Activated CD4-positive, alpha-beta T cell treated with anti-CD3 and anti-CD28 coated beads for 36 hours (primary cell): ENCODE measurements at regions of chr21 and their contacts with region 1.

Region 1: DNA sequence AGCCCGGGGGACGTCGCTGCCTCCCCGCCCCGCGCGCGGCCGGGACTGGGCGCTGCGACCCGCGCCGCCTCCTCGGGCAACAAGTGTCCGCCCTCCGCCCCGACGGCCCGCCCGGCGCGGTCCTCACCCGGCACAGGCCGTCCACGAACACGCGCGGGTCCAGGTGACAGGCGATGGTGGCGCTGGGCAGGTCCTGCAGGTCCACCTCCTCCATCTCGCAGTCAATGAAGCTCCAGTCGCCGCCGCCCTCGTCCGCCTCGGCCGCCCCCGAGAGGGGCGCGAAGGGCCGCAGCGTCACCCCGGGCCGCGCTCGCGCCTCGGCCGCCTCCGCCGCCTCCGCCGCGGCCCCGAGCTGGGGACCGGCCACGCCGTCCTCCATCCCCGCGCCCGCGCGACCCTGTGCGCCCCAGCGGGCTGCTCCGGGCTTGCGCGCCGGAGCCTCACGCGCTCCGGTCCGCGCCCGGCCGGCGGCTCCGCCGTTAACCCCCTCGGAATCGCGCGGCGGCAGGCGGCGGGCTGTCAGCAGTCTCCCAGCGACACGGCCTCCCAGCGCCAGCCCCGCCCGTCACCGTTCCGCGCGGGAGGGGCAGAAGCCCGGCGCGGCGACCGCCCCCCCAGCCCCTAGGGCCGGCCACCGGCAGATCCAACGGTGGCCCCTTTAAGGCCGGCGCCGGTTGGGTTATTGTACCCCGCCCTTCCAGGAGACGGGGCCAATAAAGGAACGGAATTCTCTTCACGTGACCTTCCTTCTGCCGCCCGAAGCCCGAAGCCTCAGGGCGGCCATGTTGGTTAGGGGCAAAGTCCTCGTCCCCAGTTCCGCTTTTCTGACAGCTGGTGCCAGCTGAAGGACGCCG is at the start of gene RCAN1:
- DNase-seq: peak; percentile 92
- ATAC-seq: peak; percentile 98
- H3K4me3 Mint-ChIP-seq: peak within 1 kb of the TSS; percentile 75
- H3K27ac Mint-ChIP-seq: peak within 1 kb of the TSS; percentile 68
- H3K4me1 Mint-ChIP-seq: peaks cover 18% of the 10 kb centered on the region
- H3K27me3 Mint-ChIP-seq: no peaks in the 10 kb centered on the region
- total RNA-seq, gene RCAN1: 9.9 to 10.0 TPM

Region 2: DNA sequence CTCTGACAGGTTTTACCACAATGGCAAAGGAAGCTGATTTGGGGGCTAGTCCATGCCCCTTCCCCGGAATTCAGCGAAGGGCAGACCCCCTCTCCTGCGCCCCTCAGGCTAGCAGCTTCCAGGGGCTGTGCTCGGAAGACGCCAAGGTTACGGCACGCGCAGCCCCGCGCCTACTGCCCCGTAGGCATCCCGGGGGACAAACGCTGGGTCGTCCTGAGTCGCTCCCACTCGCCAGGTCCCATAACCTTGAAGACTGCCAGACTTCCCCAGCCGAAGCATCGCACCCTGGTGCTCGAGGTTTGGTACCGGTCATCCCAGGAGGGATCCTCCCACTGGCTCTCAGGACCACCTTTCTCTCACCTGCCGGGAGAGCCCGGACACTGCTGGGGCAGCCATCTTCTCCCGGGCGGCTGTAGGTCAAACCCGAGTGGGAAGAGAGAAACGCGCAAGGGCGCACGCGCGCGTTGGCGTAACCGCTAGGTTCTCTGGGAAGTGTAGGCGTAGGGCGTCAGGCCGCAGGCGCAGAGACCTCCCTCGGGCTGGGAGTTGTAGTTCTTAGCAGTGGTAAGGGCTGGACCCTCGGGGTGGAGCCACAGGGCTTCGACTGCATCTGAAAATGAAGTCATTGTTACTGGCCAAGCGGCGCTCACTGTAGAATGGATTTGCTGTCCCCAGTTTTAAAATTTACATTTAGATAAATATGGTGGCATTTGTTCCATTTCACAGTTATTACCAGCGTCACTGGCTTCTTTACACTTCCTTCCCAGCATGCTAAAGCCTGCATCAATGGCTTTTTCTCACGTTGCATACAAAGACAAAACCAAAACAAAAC is 699.3 kb before region 1 on chr21 and contains the start of gene ATP5PO:
- CTCF ChIA-PET with region 1: interaction called, 4 read pairs
- POLR2A ChIA-PET with region 1: no interaction called
- intact Hi-C with region 1: loop called (anchors 1 to 10 kb)
- DNase-seq: peak; percentile 98
- ATAC-seq: peak; percentile 99
- H3K4me3 Mint-ChIP-seq: peak within 1 kb of the TSS; percentile 89
- H3K27ac Mint-ChIP-seq: peak within 1 kb of the TSS; percentile 97
- H3K4me1 Mint-ChIP-seq: peaks cover 27% of the 10 kb centered on the region
- H3K27me3 Mint-ChIP-seq: no peaks in the 10 kb centered on the region
- total RNA-seq, gene ATP5PO: 177 to 238 TPM

Region 3: GRCh38 chr21:34526618-34527290 is 88.1 kb before region 1 on chr21:
- CTCF ChIA-PET with region 1: no interaction called
- POLR2A ChIA-PET with region 1: no interaction called
- intact Hi-C with region 1: loop called (anchors 2 to 5 kb)
- DNase-seq: peak; percentile 71
- ATAC-seq: peak; percentile 85
- H3K4me3 Mint-ChIP-seq: peak overlapping the region; percentile 55
- H3K27ac Mint-ChIP-seq: peak overlapping the region; percentile 85
- H3K4me1 Mint-ChIP-seq: peaks cover 35% of the 10 kb centered on the region
- H3K27me3 Mint-ChIP-seq: peaks cover 2% of the 10 kb centered on the region

Region 4: GRCh38 chr21:34589511-34590282 is 25.2 kb before region 1 on chr21:
- CTCF ChIA-PET with region 1: no interaction called
- POLR2A ChIA-PET with region 1: no interaction called
- intact Hi-C with region 1: no loop called
- DNase-seq: no peak
- ATAC-seq: no peak
- H3K4me3 Mint-ChIP-seq: no peak overlapping the region
- H3K27ac Mint-ChIP-seq: no peak overlapping the region
- H3K4me1 Mint-ChIP-seq: peaks cover 14% of the 10 kb centered on the region
- H3K27me3 Mint-ChIP-seq: no peaks in the 10 kb centered on the region

Region 5: DNA sequence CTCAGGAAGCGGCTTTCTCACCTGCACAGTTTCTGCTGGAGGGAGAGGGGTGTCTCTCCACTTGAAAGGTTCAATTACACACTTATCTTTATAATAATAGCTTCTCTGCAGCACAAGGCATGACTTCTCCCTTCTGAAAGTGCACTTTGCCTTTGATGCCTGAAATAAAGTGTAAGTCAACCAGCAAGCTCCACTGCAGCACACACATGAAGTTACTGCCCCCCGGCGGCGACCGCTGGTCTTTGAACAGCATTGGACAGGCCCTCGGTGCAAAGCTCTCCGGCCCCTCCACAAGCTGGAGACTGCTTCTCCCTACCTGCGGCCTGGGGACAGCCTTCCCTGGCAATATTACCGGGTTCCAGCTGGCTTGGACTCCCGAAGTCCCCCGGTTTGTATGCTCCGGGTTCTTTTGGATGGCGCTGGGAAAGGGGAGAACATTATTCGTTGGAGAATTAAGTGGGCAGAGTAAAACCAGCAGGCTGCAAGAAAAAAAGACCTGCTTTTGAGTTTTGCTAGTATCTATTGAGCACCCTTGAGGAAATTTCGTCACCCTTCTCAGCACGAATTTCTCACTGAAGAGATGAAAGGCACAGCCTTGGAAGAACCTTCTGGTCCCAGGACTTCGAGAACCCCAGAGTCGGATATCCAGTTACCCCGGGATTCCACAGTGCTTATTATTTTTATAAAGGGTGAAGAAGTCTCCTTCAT is 11.7 kb before region 1 on chr21:
- CTCF ChIA-PET with region 1: interaction called, 20 read pairs
- POLR2A ChIA-PET with region 1: no interaction called
- intact Hi-C with region 1: no loop called
- DNase-seq: peak; percentile 85
- ATAC-seq: peak; percentile 89
- H3K4me3 Mint-ChIP-seq: no peak overlapping the region
- H3K27ac Mint-ChIP-seq: no peak overlapping the region
- H3K4me1 Mint-ChIP-seq: no peaks in the 10 kb centered on the region
- H3K27me3 Mint-ChIP-seq: no peaks in the 10 kb centered on the region

Region 6: DNA sequence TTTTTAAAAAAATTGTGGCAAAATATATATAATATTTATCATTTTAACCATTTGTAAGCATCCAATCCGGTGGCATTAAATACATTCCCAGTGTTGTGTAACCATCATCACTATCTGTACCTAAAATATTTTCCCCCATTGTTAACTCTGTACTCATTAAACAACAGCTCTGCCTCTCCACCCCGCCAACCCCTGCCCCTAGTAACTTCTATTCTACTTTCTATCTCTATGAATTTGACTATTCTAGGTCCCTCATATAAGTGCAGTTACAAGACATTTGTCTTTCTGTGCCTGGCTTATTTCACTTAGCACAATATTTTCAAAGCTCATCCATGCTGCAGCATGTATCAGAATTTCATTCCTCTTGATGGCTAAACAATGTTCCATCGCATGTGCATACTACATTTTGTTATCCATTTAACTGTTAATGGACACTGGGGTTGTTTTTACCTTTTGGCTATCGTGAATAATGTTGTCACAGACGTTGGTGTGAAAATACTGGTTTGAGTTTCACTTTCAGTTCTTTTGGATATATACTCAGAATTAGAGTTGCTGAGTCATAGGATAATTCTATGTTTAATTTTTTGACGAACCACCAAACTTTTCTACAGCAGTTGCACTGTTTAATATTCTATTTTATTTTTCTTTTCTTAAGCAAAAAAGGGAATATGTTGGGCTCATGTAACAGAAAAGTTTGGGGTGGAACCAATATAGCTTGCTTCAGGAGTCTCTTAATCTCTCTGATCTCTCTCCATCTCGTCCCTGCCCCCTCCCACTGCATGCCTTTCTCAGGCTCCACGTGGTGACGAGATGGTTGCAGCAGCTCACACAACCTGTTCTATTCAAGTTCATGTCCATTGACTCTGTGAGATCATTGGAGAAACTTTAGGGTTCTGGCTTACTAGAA is 25.3 kb after region 1 on chr21:
- CTCF ChIA-PET with region 1: interaction called, 3 read pairs
- POLR2A ChIA-PET with region 1: no interaction called
- intact Hi-C with region 1: loop called in 1 of 2 experiments (anchors 1 kb)
- DNase-seq: peak; percentile 65
- ATAC-seq: peak; percentile 77
- H3K4me3 Mint-ChIP-seq: peak overlapping the region; percentile 32
- H3K27ac Mint-ChIP-seq: peak overlapping the region; percentile 72
- H3K4me1 Mint-ChIP-seq: peaks cover 24% of the 10 kb centered on the region
- H3K27me3 Mint-ChIP-seq: no peaks in the 10 kb centered on the region

Region 7: GRCh38 chr21:34661848-34662247 is 47.0 kb after region 1 on chr21:
- CTCF ChIA-PET with region 1: no interaction called
- POLR2A ChIA-PET with region 1: no interaction called
- intact Hi-C with region 1: no loop called
- DNase-seq: no peak
- ATAC-seq: no peak
- H3K4me3 Mint-ChIP-seq: no peak overlapping the region
- H3K27ac Mint-ChIP-seq: no peak overlapping the region
- H3K4me1 Mint-ChIP-seq: peaks cover under 1% of the 10 kb centered on the region
- H3K27me3 Mint-ChIP-seq: peaks cover 48% of the 10 kb centered on the region

Region 8: GRCh38 chr21:36069713-36070573 is 1455.1 kb after region 1 on chr21 and contains the start of gene CBR1:
- CTCF ChIA-PET with region 1: no interaction called
- POLR2A ChIA-PET with region 1: no interaction called
- intact Hi-C with region 1: loop called in 1 of 2 experiments (anchors 5 kb)
- DNase-seq: peak; percentile 94
- ATAC-seq: peak; percentile 98
- H3K4me3 Mint-ChIP-seq: peak within 1 kb of the TSS; percentile 83
- H3K27ac Mint-ChIP-seq: peak within 1 kb of the TSS; percentile 88
- H3K4me1 Mint-ChIP-seq: peaks cover 41% of the 10 kb centered on the region
- H3K27me3 Mint-ChIP-seq: no peaks in the 10 kb centered on the region
- total RNA-seq, gene CBR1: 48.6 to 54.1 TPM